ENCODE measurements at regions of chr3 and their contacts with region 1.

Region 1: GRCh38 chr3:134754768-134755559 is 40.1 kb upstream of the EPHB1 start:
- DNase-seq: no peak
- ATAC-seq: peak; percentile 56

Region 2: DNA sequence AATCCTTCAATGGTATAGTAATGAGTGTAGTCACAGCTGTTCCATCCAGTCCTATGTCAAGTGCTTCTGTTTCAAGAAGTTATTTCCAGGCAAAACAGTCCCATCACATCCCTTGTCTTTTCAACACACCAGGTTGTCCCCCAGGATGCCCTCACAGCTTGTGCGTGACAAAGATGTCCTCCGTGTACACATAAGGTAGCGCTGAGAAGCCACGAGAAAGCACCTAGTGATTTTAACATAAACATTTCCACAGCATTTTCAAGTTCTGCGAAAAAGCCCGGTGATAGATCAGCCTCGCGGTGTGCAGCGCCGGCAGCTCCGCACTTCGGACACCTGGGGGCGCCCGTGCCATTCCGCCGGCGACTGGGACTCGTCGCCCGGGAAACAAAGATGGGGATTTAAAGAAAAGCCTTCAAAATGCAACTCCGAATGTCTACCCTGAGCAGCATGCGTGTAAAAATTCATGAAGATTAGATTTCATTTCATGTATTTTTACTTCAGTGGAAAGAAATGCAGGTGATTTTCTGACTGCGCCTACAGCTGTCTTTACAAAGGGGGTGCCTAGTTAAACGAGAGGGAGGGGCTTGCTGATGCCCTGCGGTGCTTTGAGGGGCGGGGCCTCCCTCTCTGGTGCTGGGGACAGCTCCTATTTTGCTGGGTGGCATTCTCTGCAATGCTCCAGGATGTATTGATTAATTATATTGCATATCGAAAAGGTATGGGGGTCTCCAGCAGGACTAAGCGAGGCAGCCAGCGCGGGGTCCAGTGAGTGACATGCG is 154.1 kb before region 1 on chr3:
- intact Hi-C with region 1: loop called (anchors 5 kb)
- DNase-seq: peak; percentile 91
- ATAC-seq: peak; percentile 60

Region 3: DNA sequence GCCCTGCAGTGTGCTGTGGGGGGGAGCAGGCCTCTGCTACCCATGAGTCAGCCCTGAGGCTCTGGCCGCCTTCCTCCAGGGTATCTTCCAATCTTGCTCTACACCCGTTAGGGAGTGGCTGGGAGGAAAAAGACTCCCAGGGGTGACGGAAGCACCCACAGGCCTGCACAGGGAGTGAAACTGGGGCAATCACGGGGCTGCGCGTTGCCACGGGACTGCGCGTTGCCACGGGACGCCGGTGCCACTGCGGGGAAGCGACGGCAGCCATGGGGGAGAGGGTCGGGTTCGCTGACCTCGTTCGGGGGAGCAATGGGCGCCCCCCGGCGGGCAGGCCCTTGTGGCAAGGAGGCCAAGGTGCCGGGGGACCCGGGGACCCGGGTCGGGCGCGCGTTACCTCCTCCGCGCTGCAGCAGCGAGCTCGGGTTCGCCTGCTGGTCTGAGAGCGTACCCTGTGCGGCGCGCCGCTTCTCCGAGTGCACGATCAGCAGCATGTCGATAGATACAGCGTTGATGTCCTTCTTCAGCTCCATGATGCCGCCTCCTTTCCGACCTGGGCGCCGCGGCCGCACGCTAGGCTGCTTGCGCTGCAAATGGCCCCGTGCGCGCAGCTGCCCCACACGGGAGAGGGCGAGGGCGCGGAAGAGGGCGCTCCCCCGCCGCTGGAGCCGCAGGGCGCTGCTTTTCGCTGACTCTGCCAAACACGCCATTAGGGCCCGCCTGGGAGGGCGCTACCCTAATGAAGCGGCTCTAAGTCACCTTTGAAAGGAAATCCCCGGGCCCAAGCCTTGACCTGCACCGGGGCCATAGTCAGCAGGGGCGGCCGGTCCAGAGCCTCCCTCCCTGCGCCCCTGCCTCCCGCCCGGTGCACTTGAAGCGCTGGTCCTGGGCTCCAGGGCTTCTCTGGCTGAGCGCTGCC is 104.3 kb before region 1 on chr3 and contains the start of gene KY:
- intact Hi-C with region 1: loop called (anchors 2 kb)
- DNase-seq: peak; percentile 81
- ATAC-seq: peak; percentile 87
- total RNA-seq, gene KY: 16.7 TPM

Region 4: GRCh38 chr3:134677196-134677986 is 77.6 kb before region 1 on chr3:
- intact Hi-C with region 1: loop called (anchors 5 kb)
- DNase-seq: no peak
- ATAC-seq: peak; percentile 88

Region 5: DNA sequence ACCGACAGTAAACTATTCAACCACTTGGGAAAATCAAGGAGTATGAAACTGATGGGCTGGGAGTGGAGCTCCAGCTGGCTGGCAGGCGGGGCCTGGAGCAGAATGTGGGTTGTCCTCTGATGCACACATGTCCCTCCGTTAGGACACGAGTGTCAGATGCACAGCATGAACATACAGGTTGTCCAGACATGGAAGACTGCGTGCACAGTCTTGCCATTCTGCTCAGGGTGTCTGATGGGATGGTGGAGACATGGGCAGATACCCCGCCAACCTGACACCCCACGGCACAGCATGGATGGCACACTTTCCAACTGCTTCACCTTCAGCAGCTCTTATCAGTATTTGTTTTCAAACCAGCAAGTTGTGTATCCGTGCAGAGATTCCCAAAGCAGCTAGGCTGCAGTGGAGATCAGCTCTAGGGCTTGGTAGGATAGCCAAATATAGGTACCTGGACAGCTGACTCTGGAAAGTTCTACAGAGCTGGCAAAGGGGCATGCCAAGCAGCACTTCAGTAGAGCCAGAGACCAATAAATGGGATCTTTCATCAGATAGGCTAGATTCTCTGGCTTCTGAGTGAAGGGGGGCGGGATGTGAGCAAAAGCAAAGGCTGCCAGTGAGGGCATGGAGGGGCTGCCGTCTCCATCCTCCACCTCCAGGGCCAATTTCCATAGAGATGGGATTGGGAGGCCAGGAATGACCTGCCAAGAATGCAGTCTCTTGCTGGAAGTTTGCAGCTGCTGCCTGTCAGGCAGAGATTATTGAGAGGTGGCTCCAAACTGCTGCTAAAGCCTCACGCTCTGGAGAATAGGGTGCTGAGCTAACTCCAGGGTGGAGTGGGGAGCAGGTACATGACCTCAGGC is 56.9 kb before region 1 on chr3:
- intact Hi-C with region 1: loop called (anchors 5 kb)
- DNase-seq: peak; percentile 15
- ATAC-seq: peak; percentile 38